ENCODE measurements at regions of chr10 and their contacts with region 1.

Region 1: DNA sequence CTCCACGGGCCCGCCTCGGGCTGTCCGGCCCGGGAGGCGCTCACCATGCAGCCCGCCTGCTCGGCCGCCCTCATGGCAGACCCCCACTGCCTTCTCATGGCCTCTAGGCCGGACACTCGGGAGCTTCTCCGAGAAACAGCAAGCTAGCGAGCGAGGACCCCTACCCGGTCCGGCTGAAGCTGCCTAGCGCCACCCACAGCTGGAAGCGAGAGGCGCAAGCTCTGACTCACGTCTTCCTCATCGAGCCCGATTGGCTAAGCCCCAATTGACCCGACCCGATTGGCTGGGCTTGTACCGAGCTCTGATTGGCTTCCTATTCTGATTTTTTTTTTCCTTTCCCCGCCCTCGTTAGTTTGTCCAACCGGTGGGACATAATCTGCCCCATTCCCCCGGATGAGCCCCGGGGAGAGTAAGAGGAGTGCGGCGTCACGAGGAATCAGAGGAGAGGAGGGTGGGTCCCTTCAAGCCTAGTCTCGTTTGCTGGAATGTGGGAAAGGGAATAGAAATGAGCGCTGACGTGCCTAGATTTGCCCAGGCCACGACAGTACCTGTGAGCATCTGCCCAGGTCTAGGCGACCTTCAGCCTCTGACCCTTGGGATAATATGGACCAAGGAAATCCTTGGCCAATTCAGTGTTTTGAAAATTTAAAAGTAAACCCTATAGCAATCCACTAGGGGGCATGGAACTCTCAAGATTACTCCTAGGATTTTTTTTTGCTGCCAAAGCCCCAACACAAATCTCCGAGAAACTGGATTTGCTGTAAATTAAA is at the start of gene TYSND1:
- DNase-seq: peak; percentile 98
- H3K4me3 Mint-ChIP-seq: peak within 1 kb of the TSS; percentile 86
- H3K27ac Mint-ChIP-seq: peak within 1 kb of the TSS; percentile 91
- H3K4me1 Mint-ChIP-seq: peaks cover 8% of the 10 kb centered on the region
- H3K27me3 Mint-ChIP-seq: no peaks in the 10 kb centered on the region
- CTCF ChIP-seq: peak; percentile 12
- total RNA-seq, gene TYSND1: 21.4 and 24.6 TPM in 2 replicates

Region 2: GRCh38 chr10:70115948-70116682 is 30.6 kb before region 1 on chr10:
- CTCF ChIA-PET with region 1: interaction called, 33 read pairs
- intact Hi-C with region 1: no loop called
- DNase-seq: peak; percentile 73
- H3K4me3 Mint-ChIP-seq: no peak overlapping the region
- H3K27ac Mint-ChIP-seq: no peak overlapping the region
- H3K4me1 Mint-ChIP-seq: no peaks in the 10 kb centered on the region
- H3K27me3 Mint-ChIP-seq: no peaks in the 10 kb centered on the region
- CTCF ChIP-seq: peak; percentile 96

Region 3: GRCh38 chr10:70169649-70170364 is 23.1 kb after region 1 on chr10:
- CTCF ChIA-PET with region 1: interaction called, 10 read pairs
- intact Hi-C with region 1: no loop called
- DNase-seq: no peak
- H3K4me3 Mint-ChIP-seq: peak overlapping the region; percentile 92
- H3K27ac Mint-ChIP-seq: peak overlapping the region; percentile 94
- H3K4me1 Mint-ChIP-seq: peaks cover 10% of the 10 kb centered on the region
- H3K27me3 Mint-ChIP-seq: no peaks in the 10 kb centered on the region
- CTCF ChIP-seq: no peak

Region 4: GRCh38 chr10:70283445-70284399 is 137.0 kb after region 1 on chr10 and contains the start of gene NPFFR1:
- CTCF ChIA-PET with region 1: no interaction called
- intact Hi-C with region 1: no loop called
- DNase-seq: peak; percentile 17
- H3K4me3 Mint-ChIP-seq: peak within 1 kb of the TSS; percentile 57
- H3K27ac Mint-ChIP-seq: no peak within 1 kb of the TSS
- H3K4me1 Mint-ChIP-seq: peaks cover 8% of the 10 kb centered on the region
- H3K27me3 Mint-ChIP-seq: peaks cover 55% of the 10 kb centered on the region
- CTCF ChIP-seq: no peak
- total RNA-seq, gene NPFFR1: 0.20 and 0.24 TPM in 2 replicates

Measured in Calu3 (cell line).